A673 (cell line): ENCODE measurements at regions of chr17 and their contacts with region 1.

Region 1: GRCh38 chr17:2282297-2282873 is 21.2 kb downstream of the SMG6 start:
- DNase-seq: peak; percentile 86
- H3K4me3 ChIP-seq: no peak overlapping the region
- H3K27ac ChIP-seq: peak overlapping the region; percentile 19
- H3K4me1 ChIP-seq: no peaks in the 10 kb centered on the region
- H3K27me3 ChIP-seq: no peaks in the 10 kb centered on the region
- CTCF ChIP-seq: peak; percentile 77

Region 2: GRCh38 chr17:2266045-2266864 is 16.1 kb before region 1 on chr17:
- CTCF ChIA-PET with region 1: no interaction called
- POLR2A ChIA-PET with region 1: no interaction called
- intact Hi-C with region 1: no loop called
- DNase-seq: no peak
- H3K4me3 ChIP-seq: no peak overlapping the region
- H3K27ac ChIP-seq: no peak overlapping the region
- H3K4me1 ChIP-seq: no peaks in the 10 kb centered on the region
- H3K27me3 ChIP-seq: no peaks in the 10 kb centered on the region
- CTCF ChIP-seq: no peak

Region 3: DNA sequence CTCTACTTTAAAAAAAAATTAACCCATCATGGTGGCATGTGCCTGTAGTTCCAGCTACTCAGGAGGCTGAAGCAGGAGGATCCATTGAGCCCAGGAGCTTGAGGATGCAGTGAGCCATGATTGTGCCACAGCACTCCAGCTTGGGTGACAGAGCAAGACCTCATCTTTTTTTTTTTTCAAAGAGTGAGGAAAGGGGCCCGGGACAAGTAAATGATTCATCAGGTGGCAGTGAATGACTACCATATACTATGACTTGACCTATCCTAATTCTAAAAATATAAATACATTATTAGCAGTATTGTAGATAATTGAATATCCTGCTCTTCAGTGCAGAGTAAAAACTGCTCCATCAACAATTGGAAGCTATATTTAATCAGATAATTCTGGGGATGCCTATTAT is 373.9 kb after region 1 on chr17:
- CTCF ChIA-PET with region 1: no interaction called
- POLR2A ChIA-PET with region 1: interaction called, 10 read pairs
- intact Hi-C with region 1: no loop called
- DNase-seq: no peak
- H3K4me3 ChIP-seq: no peak overlapping the region
- H3K27ac ChIP-seq: no peak overlapping the region
- H3K4me1 ChIP-seq: no peaks in the 10 kb centered on the region
- H3K27me3 ChIP-seq: no peaks in the 10 kb centered on the region
- CTCF ChIP-seq: no peak